ENCODE measurements at regions of chr20 and their contacts with region 1.

Region 1: DNA sequence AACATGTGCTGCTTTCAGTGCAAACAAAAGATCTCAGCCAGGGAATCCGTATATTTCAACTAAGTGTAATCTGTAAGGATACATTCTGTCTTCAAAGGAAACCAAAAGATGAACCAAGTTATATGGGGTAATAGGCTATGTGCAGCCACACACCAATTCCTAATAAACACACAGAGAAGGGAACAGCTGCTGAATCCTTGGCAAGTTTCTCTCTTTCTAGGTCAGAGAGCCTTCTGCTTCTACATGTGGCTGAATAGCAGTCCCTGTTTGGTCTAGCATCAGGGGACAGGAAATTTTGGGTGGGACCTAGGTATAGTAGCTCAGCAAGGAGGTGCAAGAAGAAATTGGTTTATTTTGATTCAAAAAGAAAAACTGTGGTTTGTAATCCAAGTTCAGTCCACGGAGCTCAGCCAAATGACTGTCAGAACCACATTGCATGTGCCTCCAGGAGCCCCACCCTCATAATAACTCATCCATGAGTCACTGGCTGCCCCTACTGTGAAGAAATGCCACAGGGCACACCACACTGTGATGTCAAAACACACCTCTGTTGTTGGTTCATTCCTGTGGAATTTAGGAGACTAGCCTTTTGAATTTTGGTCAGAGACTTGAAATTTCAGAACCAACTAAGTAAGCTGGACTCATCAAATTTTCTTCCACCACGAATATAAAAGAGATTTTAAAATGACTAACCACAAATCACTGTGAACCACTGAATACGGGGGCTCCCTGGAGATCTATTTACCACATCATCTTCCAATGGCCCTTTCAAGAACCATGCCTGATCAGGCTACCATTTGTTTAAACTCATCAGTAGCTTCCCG is 21.1 kb downstream of the SPTLC3 start:
- DNase-seq: peak; percentile 97
- H3K4me3 Mint-ChIP-seq: peak overlapping the region; percentile 57
- H3K27ac Mint-ChIP-seq: peak overlapping the region; percentile 97
- H3K4me1 Mint-ChIP-seq: peaks cover 69% of the 10 kb centered on the region
- H3K27me3 Mint-ChIP-seq: no peaks in the 10 kb centered on the region
- CTCF ChIP-seq: no peak

Region 2: DNA sequence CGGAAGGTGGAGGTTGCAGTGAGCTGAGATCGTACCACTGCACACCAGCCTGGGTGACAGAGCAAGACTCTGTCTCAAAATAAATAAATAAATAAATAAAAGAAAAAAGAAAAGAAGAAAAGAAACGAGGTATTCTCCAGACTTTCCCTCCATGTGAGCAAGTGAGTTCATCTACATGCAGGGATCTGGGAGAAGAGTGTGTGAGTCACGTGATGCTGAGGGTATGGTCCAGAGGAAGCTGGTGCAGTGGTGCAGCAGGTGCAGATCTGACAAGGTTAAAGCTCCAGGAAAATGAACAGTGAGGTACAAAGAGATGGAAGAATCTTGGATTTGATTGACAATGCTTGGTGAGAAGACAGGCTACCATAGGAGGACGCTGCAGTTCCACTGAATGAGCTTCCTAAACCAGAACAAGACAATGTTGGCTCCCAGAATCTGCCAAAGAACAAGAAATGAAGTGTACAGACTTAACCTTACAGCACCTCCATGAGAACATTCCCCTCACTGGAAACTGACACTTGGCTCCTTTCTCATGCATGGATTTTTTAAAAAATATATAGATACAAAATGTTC is 1191.7 kb before region 1 on chr20:
- CTCF ChIA-PET with region 1: no interaction called
- POLR2A ChIA-PET with region 1: no interaction called
- intact Hi-C with region 1: no loop called
- DNase-seq: no peak
- H3K4me3 Mint-ChIP-seq: no peak overlapping the region
- H3K27ac Mint-ChIP-seq: no peak overlapping the region
- H3K4me1 Mint-ChIP-seq: no peaks in the 10 kb centered on the region
- H3K27me3 Mint-ChIP-seq: no peaks in the 10 kb centered on the region
- CTCF ChIP-seq: no peak

Region 3: GRCh38 chr20:12217382-12217781 is 812.5 kb before region 1 on chr20:
- CTCF ChIA-PET with region 1: no interaction called
- POLR2A ChIA-PET with region 1: no interaction called
- intact Hi-C with region 1: no loop called
- DNase-seq: peak; percentile 29
- H3K4me3 Mint-ChIP-seq: no peak overlapping the region
- H3K27ac Mint-ChIP-seq: no peak overlapping the region
- H3K4me1 Mint-ChIP-seq: no peaks in the 10 kb centered on the region
- H3K27me3 Mint-ChIP-seq: no peaks in the 10 kb centered on the region
- CTCF ChIP-seq: no peak

Region 4: DNA sequence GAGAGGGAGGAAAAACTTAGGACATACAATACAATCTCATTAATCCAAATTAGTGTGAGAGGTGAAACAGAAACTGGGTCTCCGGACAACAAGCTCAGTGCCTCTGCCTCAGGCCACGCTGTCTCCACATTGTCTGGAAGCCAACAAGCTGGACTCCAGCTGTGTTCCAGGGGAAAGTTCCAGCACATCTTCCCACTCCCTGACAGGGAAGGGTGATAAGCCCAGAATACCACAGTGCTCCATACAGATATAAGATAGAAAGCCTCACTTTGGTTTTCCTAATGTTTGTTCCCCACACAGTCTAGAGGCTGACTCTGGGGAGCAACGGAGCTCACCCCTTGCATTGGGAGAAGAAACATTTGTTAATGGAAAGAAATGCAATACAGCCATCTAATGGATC is 138.3 kb before region 1 on chr20:
- CTCF ChIA-PET with region 1: no interaction called
- POLR2A ChIA-PET with region 1: no interaction called
- intact Hi-C with region 1: no loop called
- DNase-seq: no peak
- H3K4me3 Mint-ChIP-seq: no peak overlapping the region
- H3K27ac Mint-ChIP-seq: no peak overlapping the region
- H3K4me1 Mint-ChIP-seq: no peaks in the 10 kb centered on the region
- H3K27me3 Mint-ChIP-seq: peaks cover 74% of the 10 kb centered on the region
- CTCF ChIP-seq: no peak

Region 5: GRCh38 chr20:12977328-12978125 is 52.4 kb before region 1 on chr20:
- CTCF ChIA-PET with region 1: no interaction called
- POLR2A ChIA-PET with region 1: interaction called, 27 read pairs
- intact Hi-C with region 1: no loop called
- DNase-seq: peak; percentile 8
- H3K4me3 Mint-ChIP-seq: no peak overlapping the region
- H3K27ac Mint-ChIP-seq: peak overlapping the region; percentile 6
- H3K4me1 Mint-ChIP-seq: peaks cover 8% of the 10 kb centered on the region
- H3K27me3 Mint-ChIP-seq: no peaks in the 10 kb centered on the region
- CTCF ChIP-seq: no peak

Region 6: GRCh38 chr20:12984069-12984765 is 45.7 kb before region 1 on chr20:
- CTCF ChIA-PET with region 1: interaction called, 5 read pairs
- POLR2A ChIA-PET with region 1: interaction called, 27 read pairs
- intact Hi-C with region 1: no loop called
- DNase-seq: peak; percentile 23
- H3K4me3 Mint-ChIP-seq: no peak overlapping the region
- H3K27ac Mint-ChIP-seq: no peak overlapping the region
- H3K4me1 Mint-ChIP-seq: peaks cover 15% of the 10 kb centered on the region
- H3K27me3 Mint-ChIP-seq: no peaks in the 10 kb centered on the region
- CTCF ChIP-seq: no peak

Region 7: DNA sequence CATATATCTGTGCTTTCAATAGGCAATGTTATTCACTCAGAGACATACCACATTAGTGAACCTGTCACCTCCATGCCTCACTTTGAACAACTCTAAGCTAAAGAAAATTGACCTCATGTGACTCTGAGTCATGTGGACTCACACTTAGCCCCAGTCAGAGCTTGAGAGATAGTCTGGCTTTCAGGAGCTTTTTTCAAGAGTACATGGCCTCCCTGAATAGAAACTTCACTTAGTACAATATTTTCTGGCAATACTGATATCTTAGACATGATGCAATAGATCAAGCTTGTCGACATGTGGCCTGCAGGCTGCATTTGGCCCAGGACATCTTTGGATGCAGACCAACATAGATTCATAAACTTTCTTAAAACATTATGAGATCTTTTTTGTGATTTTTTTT is 12.7 kb before region 1 on chr20:
- CTCF ChIA-PET with region 1: interaction called, 8 read pairs
- POLR2A ChIA-PET with region 1: interaction called, 139 read pairs
- intact Hi-C with region 1: no loop called
- DNase-seq: no peak
- H3K4me3 Mint-ChIP-seq: peak overlapping the region; percentile 18
- H3K27ac Mint-ChIP-seq: peak overlapping the region; percentile 58
- H3K4me1 Mint-ChIP-seq: peaks cover 47% of the 10 kb centered on the region
- H3K27me3 Mint-ChIP-seq: no peaks in the 10 kb centered on the region
- CTCF ChIP-seq: no peak

Region 8: GRCh38 chr20:13212750-13213149 is 182.9 kb after region 1 on chr20:
- CTCF ChIA-PET with region 1: no interaction called
- POLR2A ChIA-PET with region 1: no interaction called
- intact Hi-C with region 1: no loop called
- DNase-seq: peak; percentile 58
- H3K4me3 Mint-ChIP-seq: no peak overlapping the region
- H3K27ac Mint-ChIP-seq: peak overlapping the region; percentile 53
- H3K4me1 Mint-ChIP-seq: peaks cover 17% of the 10 kb centered on the region
- H3K27me3 Mint-ChIP-seq: no peaks in the 10 kb centered on the region
- CTCF ChIP-seq: no peak

Measured in MCF 10A (cell line).